ENCODE measurements at regions of chr2 and their contacts with region 1.

Region 1: GRCh38 chr2:64609227-64609941 is 44.3 kb downstream of the SERTAD2 start:
- DNase-seq: peak; percentile 91
- CTCF ChIP-seq: peak; percentile 82

Region 2: DNA sequence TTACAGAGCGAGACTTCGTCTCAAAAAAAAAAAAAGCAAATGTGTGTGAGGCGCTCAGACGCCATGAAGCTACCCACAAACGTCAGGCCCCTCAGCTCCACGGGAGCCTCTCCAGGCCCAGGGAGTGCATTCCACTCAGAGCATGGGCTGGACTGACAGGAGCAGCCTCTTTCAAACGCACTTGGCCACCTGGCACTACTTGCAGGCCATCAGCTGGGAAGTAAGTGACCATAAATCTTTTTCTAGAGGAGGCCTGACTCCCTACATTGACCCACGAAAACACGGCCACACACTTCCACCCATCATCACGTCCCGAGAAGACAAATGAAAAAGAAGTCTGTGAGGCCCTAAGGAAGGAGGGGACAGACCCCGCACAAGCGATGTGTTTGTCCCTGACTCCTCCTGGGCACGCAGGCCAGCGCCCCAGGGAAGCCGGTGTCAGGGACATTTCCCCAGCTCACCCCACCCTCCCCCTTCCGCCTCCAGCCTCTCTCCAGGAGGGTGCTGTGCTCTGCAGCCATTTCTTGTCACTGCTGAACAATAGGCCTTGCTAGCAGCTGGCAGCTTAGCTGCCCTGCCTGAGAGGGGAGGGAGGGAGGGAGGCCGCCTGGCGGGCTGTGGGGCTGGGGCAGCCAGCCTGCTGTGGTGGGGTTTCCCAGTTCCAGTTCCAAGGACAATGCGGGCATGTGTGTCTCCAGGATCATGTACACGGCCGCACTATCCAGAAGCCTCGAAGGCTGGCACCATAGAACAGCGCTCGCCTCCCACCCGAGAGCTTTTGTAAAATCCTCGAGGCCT is 17.8 kb after region 1 on chr2:
- CTCF ChIA-PET with region 1: interaction called, 72 read pairs
- POLR2A ChIA-PET with region 1: no interaction called
- DNase-seq: no peak
- CTCF ChIP-seq: no peak

Region 3: GRCh38 chr2:64924170-64924934 is 315.0 kb after region 1 on chr2:
- CTCF ChIA-PET with region 1: no interaction called
- POLR2A ChIA-PET with region 1: no interaction called
- DNase-seq: no peak
- CTCF ChIP-seq: no peak

Region 4: DNA sequence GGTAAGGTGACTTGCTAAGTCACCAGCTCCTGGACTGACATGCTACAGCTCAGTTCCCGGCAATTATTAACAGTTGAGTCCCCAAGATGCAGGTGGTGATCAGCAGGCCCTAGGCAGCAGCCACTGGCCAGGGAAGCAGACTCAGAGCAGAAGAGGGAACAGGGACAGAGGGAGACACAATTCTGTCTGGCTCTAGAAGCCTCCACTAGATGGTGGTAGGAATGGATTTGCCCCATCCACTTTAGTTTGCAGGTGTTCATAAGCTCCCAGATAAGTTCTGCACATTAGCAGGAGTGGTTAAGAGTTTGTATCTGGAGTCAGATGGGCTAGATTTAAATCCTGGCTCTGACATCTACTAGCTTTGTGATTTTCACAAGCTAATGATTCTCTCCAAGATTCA is 354.3 kb after region 1 on chr2:
- CTCF ChIA-PET with region 1: no interaction called
- POLR2A ChIA-PET with region 1: no interaction called
- DNase-seq: no peak
- CTCF ChIP-seq: no peak

Measured in GM10248 (cell line).